ENCODE measurements at regions of chr5 and their contacts with region 1.

Region 1: DNA sequence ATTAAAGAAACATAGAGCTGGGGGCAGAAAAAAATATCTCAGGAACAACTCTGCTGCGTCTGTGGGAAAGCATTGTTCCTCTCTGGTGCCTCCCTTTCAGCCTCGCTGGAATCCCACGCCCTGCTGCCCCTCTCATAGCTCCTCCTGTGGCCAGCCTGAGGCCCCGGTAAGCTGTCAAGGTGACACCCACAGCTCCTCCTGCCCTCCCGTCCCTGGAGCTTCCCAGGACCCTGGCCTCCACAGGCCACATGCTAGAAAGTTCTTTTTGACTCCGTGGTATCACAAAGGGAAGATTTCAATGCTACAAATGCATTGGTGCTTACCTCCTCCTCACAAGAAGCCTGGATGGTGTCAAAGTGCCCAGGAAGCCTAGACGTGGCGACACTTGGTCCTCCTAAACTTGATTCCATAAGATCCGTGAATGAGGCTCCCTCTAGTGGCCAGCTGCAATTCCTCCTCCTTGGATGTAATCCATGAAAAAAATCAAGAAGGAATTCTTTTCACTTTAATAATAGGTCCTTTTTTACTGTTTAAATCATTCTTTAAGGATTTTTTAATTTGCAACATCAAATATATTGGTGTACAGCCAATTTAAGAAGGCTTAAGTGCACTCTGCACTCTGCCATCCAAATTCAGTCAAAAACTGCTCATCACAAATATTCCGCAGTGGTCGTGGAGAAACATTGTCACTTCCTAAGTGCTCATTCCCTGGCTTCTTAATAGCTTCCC is 104.9 kb downstream of the CFAP90 start:
- DNase-seq: peak; percentile 69
- H3K4me3 ChIP-seq: no peak overlapping the region
- H3K27ac ChIP-seq: no peak overlapping the region
- H3K4me1 ChIP-seq: no peaks in the 10 kb centered on the region
- H3K27me3 ChIP-seq: no peaks in the 10 kb centered on the region
- CTCF ChIP-seq: peak; percentile 72 to 87 (median 82)
- POLR2A ChIP-seq: no peak

Region 2: GRCh38 chr5:6765612-6766525 is 980.2 kb before region 1 on chr5:
- intact Hi-C with region 1: loop called (anchors 10 kb)
- DNase-seq: peak; percentile 74
- H3K4me3 ChIP-seq: no peak overlapping the region
- H3K27ac ChIP-seq: no peak overlapping the region
- H3K4me1 ChIP-seq: no peaks in the 10 kb centered on the region
- H3K27me3 ChIP-seq: no peaks in the 10 kb centered on the region
- CTCF ChIP-seq: peak; percentile 58 to 90 (median 74)
- POLR2A ChIP-seq: no peak

Region 3: DNA sequence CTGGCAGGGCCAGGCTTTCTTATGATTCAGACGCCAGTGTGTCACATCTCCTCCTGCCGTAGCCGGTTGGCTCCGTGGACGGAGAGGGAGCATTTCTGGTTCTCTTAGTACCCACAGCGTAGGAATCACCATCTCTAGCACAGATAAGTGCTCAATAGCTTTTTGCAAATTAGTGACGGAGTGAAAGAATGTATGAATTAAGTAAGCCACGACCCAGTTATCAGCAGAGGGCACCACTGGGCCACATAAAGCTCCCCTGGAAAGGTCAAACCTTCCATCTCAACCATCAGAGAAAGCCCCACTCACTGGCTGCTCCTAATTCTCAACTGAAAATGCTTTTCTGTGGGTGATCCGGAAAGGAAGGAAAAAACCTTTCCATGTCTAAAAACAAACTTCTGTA is 667.1 kb before region 1 on chr5:
- intact Hi-C with region 1: loop called (anchors 10 kb)
- DNase-seq: no peak
- H3K4me3 ChIP-seq: no peak overlapping the region
- H3K27ac ChIP-seq: no peak overlapping the region
- H3K4me1 ChIP-seq: no peaks in the 10 kb centered on the region
- H3K27me3 ChIP-seq: no peaks in the 10 kb centered on the region
- CTCF ChIP-seq: peak in 2 of 4 experiments; percentile 31 to 32
- POLR2A ChIP-seq: no peak

Region 4: GRCh38 chr5:7208022-7208421 is 538.0 kb before region 1 on chr5:
- intact Hi-C with region 1: no loop called
- DNase-seq: no peak
- H3K4me3 ChIP-seq: no peak overlapping the region
- H3K27ac ChIP-seq: no peak overlapping the region
- H3K4me1 ChIP-seq: no peaks in the 10 kb centered on the region
- H3K27me3 ChIP-seq: no peaks in the 10 kb centered on the region
- CTCF ChIP-seq: no peak
- POLR2A ChIP-seq: no peak